Naive thymus-derived CD4-positive, alpha-beta T cell (primary cell): ENCODE measurements at regions of chr16 and their contacts with region 1.

Region 1: DNA sequence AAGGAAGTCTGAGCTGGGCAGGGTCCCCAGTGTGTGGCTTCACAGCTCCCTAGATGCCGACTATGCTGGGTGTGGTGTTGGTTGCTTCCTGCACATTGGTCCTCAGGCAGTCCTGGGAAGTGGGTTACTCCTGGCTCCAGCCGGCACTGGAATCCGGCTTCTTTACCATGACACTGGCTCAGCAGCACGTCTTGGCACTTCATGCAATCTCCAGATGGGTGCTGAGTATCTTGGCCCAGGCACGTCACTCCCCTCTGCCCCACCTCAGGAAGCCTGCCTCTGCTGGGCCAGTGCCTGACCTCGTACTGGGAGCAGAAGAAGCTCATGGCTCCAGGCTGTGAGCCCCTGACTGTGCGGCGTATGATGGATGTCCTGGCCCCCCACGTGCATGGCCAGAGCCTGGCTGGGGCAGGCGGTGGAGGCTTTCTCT is 24.5 kb downstream of the FCSK start:
- DNase-seq: no peak
- ATAC-seq: no peak
- H3K4me3 ChIP-seq: no peak overlapping the region
- H3K4me3 Mint-ChIP-seq: no peak overlapping the region
- H3K27ac ChIP-seq: peak overlapping the region; percentile 1
- H3K27ac Mint-ChIP-seq: peak overlapping the region in 3 of 9 donors; percentile 25 to 81 (median 58)
- H3K4me1 ChIP-seq: no peaks in the 10 kb centered on the region
- H3K4me1 Mint-ChIP-seq: peaks cover 0 to 21% (median 0%) of the 10 kb centered on the region in 7 donors
- H3K27me3 ChIP-seq: no peaks in the 10 kb centered on the region
- H3K27me3 Mint-ChIP-seq: no peaks in the 10 kb centered on the region

Region 2: DNA sequence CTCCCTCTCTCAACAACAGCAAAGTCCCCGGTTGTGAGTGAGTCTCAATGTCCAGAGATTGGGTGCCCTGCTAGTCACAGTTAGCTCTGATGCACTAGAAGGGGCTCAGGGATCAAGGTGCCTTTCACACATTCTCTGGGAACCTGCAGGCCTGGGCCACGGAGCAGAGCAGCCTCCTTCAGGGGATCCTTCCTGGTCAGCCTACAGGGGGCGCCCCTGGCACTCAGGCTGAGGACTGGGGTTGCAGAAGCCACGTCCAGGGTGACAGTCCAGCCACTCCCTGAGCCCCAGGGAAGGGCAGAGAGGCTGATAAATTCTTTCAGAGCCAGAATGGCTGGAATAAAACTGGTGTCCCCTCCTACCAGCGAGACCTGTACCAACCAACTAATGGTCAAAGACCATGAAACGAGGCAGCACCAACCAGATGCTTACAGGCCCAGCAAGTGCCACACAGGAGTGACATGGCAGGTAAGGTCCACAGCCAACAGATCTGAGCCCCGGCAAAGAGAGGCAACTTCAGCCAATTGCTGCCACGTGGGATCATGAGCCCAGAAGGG is 83.5 kb before region 1 on chr16:
- CTCF ChIA-PET with region 1: no interaction called
- POLR2A ChIA-PET with region 1: no interaction called
- intact Hi-C with region 1: loop called in 1 of 2 experiments (anchors 5 kb)
- DNase-seq: peak in 7 of 9 donors; percentile 38 to 75 (median 54)
- ATAC-seq: peak; percentile 86
- H3K4me3 ChIP-seq: no peak overlapping the region
- H3K4me3 Mint-ChIP-seq: no peak overlapping the region
- H3K27ac ChIP-seq: no peak overlapping the region
- H3K27ac Mint-ChIP-seq: peak overlapping the region in 1 of 9 donors; percentile 46
- H3K4me1 ChIP-seq: no peaks in the 10 kb centered on the region
- H3K4me1 Mint-ChIP-seq: peaks cover 0 to 11% (median 0%) of the 10 kb centered on the region in 7 donors
- H3K27me3 ChIP-seq: no peaks in the 10 kb centered on the region
- H3K27me3 Mint-ChIP-seq: no peaks in the 10 kb centered on the region

Region 3: GRCh38 chr16:70529051-70529777 is 50.3 kb after region 1 on chr16:
- CTCF ChIA-PET with region 1: no interaction called
- POLR2A ChIA-PET with region 1: no interaction called
- intact Hi-C with region 1: no loop called
- DNase-seq: peak in 5 of 9 donors; percentile 7 to 28 (median 18)
- ATAC-seq: peak; percentile 69
- H3K4me3 ChIP-seq: no peak overlapping the region
- H3K4me3 Mint-ChIP-seq: peak overlapping the region in 7 of 10 donors; percentile 6 to 59 (median 42)
- H3K27ac ChIP-seq: peak overlapping the region; percentile 16
- H3K27ac Mint-ChIP-seq: peak overlapping the region in 8 of 9 donors; percentile 32 to 82 (median 56)
- H3K4me1 ChIP-seq: peaks cover 18 to 40% of the 10 kb centered on the region in 2 donors
- H3K4me1 Mint-ChIP-seq: peaks cover 24 to 72% (median 59%) of the 10 kb centered on the region in 7 donors
- H3K27me3 ChIP-seq: no peaks in the 10 kb centered on the region
- H3K27me3 Mint-ChIP-seq: no peaks in the 10 kb centered on the region